ENCODE measurements at regions of chr11 and their contacts with region 1.

Region 1: DNA sequence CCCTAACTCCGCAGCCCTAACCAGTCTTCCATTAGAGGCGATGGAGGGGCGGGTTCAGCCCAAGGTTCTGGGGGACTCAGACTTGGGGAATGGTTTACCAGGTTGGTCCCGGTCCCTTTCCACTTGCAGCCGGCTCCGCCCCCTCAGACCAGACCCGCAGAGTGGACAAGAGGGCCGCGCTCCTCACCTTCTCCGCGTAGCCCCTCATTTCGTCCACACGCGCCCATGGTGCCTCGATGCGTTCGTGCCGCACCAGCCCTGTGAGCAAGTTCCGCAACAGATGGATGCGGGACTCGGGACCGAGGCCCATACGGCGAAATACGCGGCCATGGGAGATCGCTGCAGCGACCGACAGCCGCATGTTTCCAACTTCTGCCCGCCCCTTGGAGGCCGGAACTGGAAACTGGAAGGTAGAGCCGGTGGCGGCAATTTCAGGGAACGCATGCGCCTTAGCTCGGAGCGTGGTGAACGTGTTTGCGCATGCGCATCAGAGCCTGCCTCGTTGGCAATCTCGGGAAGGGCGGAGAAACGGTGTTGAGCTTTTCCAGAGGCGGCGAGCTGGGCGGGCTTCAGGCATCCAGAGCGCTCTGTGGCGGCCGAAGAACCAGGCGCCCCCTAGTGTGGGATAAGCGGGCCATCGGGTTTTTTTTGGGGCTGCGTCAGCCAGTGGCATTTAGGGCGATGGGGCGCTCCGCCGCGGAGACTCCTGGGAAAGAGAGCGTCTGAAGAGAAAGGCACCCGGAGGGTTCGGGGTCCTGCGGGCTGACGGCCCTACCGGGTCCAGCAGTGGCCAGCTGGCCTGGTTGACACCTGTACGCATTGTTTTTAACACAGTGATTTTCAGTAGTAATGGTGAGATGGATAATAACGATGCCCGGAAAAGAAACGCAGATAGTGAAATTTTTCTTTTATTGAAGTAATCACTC is at the start of gene MRPL17:
- DNase-seq: peak; percentile 94
- ATAC-seq: peak; percentile 95
- H3K4me3 Mint-ChIP-seq: peak within 1 kb of the TSS; percentile 99
- H3K27ac Mint-ChIP-seq: peak within 1 kb of the TSS; percentile 98
- H3K4me1 Mint-ChIP-seq: peaks cover 24% of the 10 kb centered on the region
- H3K27me3 Mint-ChIP-seq: no peaks in the 10 kb centered on the region
- CTCF ChIP-seq: peak; percentile 73
- total RNA-seq, gene MRPL17: 34.1 and 34.2 TPM in 2 replicates

Region 2: GRCh38 chr11:5671841-5672240 is 1011.4 kb before region 1 on chr11:
- CTCF ChIA-PET with region 1: no interaction called
- POLR2A ChIA-PET with region 1: no interaction called
- intact Hi-C with region 1: no loop called
- DNase-seq: no peak
- ATAC-seq: no peak
- H3K4me3 Mint-ChIP-seq: no peak overlapping the region
- H3K27ac Mint-ChIP-seq: no peak overlapping the region
- H3K4me1 Mint-ChIP-seq: peaks cover 4% of the 10 kb centered on the region
- H3K27me3 Mint-ChIP-seq: no peaks in the 10 kb centered on the region
- CTCF ChIP-seq: no peak

Region 3: DNA sequence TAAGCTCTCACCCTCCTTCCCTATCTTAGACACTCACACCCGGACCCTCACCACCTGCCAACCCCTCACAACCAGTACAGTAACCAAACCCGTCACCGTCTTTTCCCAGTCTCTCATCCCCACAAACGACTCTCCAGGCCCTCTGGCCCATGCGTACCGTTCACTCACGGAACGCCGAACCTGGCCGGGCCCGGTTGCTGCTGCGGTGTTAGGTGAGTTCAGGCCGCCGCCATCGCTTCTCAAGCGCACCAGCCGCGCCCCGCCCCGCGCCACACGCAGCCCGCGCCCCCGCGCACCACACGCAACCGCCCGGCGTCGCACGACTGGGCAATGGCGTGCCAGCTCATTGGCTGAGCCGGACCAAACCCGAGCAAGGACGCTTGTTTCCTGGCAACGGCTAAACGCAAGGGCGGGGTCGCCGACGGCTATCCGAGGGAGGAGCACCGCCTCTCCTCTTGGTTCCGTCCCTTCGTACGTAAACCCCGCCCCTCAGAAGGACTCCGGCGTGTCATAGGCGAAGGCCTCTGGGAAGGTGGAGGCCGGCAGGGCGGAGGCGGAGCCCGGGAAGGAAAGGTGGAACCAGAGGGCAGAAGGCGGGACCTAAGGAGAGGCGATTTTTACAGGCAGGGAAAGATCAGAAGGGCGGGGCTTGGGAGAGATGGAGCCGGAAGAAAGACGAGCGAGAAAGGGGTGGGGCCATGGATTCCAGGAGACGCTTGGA is 448.7 kb before region 1 on chr11 and contains the start of gene FHIP1B:
- CTCF ChIA-PET with region 1: no interaction called
- POLR2A ChIA-PET with region 1: no interaction called
- intact Hi-C with region 1: loop called (anchors 1 kb)
- DNase-seq: peak; percentile 95
- ATAC-seq: peak; percentile 93
- H3K4me3 Mint-ChIP-seq: peak within 1 kb of the TSS; percentile 99
- H3K27ac Mint-ChIP-seq: peak within 1 kb of the TSS; percentile 92
- H3K4me1 Mint-ChIP-seq: peaks cover 32% of the 10 kb centered on the region
- H3K27me3 Mint-ChIP-seq: peaks cover 3% of the 10 kb centered on the region
- CTCF ChIP-seq: no peak
- total RNA-seq, gene FHIP1B: 27.7 and 32.8 TPM in 2 replicates

Region 4: DNA sequence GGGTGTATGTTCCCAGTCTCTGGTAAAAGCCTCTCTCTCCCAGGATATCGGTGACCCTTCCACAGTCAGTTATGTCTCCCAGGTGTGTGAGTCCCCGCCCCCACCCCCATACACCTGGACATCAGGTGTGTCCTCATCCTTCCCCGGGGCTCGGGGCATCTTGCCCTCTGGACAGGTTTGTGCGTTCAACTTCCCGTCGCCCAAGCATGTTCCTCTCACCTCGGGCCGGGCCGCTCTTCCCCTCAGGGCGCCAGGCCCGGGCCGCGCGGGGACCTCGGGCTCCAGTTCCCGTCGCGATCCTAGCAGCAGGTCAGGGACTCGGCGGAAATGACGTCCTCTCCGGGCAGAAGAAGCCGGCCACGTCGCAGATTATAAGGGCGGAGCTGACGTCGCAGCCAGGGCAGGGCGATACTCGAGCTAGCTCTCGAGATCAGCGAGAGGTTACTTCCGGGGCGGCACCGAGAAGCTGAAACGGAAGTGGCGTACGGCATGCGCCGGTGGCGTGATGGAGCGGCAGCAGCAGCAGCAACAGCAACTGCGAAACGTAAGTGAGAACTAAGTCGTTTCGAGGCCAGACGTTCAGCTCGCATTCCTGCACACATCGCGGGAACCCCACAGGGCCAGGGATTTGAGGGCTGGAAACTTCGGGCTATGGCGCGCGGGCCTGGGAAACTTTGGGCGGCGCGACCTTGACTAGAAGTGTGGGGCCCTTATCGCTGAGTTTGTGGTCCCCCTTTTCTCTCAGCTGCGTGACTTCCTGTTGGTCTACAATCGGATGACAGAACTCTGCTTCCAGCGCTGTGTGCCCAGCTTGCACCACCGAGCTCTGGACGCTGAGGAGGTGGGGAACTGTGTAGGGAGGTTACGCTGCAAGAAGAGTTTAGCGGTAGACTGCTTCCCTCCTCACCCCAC is 201.9 kb before region 1 on chr11 and contains the starts of genes ARFIP2 and TIMM10B:
- CTCF ChIA-PET with region 1: interaction called, 8 read pairs
- POLR2A ChIA-PET with region 1: interaction called, 17 read pairs
- intact Hi-C with region 1: loop called (anchors 1 kb)
- DNase-seq: peak; percentile 92
- ATAC-seq: peak; percentile 95
- H3K4me3 Mint-ChIP-seq: peak within 1 kb of the TSS; percentile 95
- H3K27ac Mint-ChIP-seq: peak within 1 kb of the TSS; percentile 97
- H3K4me1 Mint-ChIP-seq: peaks cover 42% of the 10 kb centered on the region
- H3K27me3 Mint-ChIP-seq: no peaks in the 10 kb centered on the region
- CTCF ChIP-seq: no peak
- total RNA-seq, gene ARFIP2: 40.6 and 43.1 TPM in 2 replicates
- total RNA-seq, gene TIMM10B: 48.0 and 60.0 TPM in 2 replicates

Region 5: GRCh38 chr11:6603287-6604080 is 79.7 kb before region 1 on chr11 and contains the starts of genes ILK and RRP8:
- CTCF ChIA-PET with region 1: interaction called, 13 read pairs
- POLR2A ChIA-PET with region 1: interaction called, 36 read pairs
- intact Hi-C with region 1: loop called (anchors 1 kb)
- DNase-seq: peak; percentile 78
- ATAC-seq: peak; percentile 88
- H3K4me3 Mint-ChIP-seq: no peak within 1 kb of the TSS
- H3K27ac Mint-ChIP-seq: no peak within 1 kb of the TSS
- H3K4me1 Mint-ChIP-seq: peaks cover 10% of the 10 kb centered on the region
- H3K27me3 Mint-ChIP-seq: no peaks in the 10 kb centered on the region
- CTCF ChIP-seq: no peak
- total RNA-seq, gene ILK: 113 and 128 TPM in 2 replicates
- total RNA-seq, gene RRP8: 29.1 and 30.5 TPM in 2 replicates

Region 6: DNA sequence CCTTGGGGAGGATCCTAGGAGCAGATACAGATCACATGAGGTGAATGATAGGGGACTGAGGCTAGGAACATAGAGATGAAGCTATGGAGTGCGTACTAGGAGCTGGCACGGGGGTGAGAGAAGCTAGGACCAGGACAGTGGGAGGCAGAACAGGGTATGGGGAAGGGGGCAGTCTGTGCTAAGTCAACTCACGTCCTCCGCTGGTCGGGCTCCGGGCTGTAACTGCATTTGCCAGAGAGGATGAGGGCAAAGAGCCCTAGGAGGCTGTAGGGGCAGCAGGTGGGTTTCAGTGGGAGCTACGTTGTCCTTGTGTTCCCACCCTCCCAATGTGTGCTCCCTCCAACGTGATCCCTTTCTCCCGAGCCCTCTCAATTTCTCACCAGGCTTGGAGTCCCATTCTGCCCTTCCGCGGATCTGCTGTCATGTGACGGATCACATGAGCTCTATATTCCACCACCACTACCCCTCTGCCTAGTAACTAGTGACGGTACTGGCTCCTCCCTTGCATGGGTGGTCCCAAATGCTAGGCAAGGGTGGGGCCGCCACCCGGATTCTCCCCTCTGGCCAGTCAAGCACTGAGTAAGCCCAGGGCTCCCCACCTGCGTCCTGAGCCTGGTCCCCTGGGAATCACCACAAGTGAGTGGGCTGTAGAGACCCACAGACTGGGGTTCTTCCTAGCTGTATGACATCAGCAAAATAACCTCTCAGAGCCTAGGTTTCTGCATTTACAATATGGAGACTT is 64.0 kb before region 1 on chr11 and contains the start of gene TPP1:
- CTCF ChIA-PET with region 1: interaction called, 15 read pairs
- POLR2A ChIA-PET with region 1: interaction called, 49 read pairs
- intact Hi-C with region 1: loop called (anchors 1 kb)
- DNase-seq: peak; percentile 87
- ATAC-seq: peak; percentile 89
- H3K4me3 Mint-ChIP-seq: no peak within 1 kb of the TSS
- H3K27ac Mint-ChIP-seq: no peak within 1 kb of the TSS
- H3K4me1 Mint-ChIP-seq: peaks cover 7% of the 10 kb centered on the region
- H3K27me3 Mint-ChIP-seq: no peaks in the 10 kb centered on the region
- CTCF ChIP-seq: no peak
- total RNA-seq, gene TPP1: 98.2 and 123 TPM in 2 replicates

Region 7: DNA sequence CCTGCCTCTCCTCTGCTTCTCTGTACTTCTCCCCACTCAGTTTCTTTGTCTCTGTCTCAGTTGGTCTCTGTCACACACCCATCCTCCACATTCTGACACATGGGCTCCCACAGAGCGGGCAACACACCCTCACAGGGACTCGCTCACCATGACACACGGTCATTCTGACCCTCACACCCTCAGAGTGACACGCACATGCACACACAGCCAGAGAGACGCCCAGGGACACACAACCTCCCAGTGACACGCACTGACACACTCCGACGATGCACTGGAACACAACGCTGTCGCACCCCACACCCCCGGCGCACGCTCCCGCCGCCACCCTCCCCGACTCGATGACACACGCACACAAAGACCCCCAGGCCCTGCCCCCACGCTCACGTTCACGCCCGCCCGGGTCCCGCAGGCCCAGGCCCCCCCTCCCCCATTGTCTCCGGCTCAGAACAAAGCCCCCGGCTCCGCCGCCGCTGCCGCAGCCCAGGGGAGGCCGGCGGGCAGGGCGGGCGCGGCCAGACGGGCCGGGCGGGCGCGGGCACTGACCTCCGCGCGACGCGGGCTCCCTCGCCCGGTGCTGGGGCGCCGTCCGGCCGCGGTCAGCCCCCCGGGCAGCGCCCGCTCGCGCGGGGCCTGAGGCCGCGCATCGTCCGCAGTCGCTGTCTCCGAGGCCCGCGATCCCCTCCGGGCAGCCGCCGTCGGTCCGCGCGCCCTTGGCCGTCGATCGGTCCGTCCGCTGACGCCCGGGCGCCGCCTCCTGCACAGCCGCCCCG is 28.0 kb before region 1 on chr11:
- CTCF ChIA-PET with region 1: interaction called, 3 read pairs
- POLR2A ChIA-PET with region 1: interaction called, 4 read pairs
- intact Hi-C with region 1: loop called (anchors 1 kb)
- DNase-seq: no peak
- ATAC-seq: peak; percentile 53
- H3K4me3 Mint-ChIP-seq: no peak overlapping the region
- H3K27ac Mint-ChIP-seq: no peak overlapping the region
- H3K4me1 Mint-ChIP-seq: peaks cover 3% of the 10 kb centered on the region
- H3K27me3 Mint-ChIP-seq: peaks cover 6% of the 10 kb centered on the region
- CTCF ChIP-seq: no peak

Region 8: DNA sequence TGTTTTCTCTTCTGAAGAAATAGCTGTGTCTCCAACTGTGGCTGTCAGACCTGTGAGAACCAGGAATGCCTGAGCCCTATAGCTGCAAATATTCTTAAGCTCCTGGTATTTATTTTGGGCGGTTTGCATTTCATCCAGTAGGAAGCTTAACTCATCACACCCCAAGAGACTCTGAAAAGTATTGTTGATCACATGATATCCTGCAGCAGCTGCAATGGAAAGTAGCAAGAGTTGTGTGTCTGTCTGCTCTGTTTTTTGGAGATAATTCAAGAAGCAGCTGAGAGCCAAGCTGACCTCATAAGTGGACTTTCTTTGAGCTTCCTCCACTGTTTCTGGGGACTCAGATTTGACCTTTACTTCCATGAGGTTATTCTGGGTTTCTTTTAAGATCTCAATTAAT is 36.4 kb after region 1 on chr11:
- CTCF ChIA-PET with region 1: no interaction called
- POLR2A ChIA-PET with region 1: no interaction called
- intact Hi-C with region 1: no loop called
- DNase-seq: no peak
- ATAC-seq: no peak
- H3K4me3 Mint-ChIP-seq: no peak overlapping the region
- H3K27ac Mint-ChIP-seq: no peak overlapping the region
- H3K4me1 Mint-ChIP-seq: peaks cover 34% of the 10 kb centered on the region
- H3K27me3 Mint-ChIP-seq: no peaks in the 10 kb centered on the region
- CTCF ChIP-seq: no peak

Region 9: DNA sequence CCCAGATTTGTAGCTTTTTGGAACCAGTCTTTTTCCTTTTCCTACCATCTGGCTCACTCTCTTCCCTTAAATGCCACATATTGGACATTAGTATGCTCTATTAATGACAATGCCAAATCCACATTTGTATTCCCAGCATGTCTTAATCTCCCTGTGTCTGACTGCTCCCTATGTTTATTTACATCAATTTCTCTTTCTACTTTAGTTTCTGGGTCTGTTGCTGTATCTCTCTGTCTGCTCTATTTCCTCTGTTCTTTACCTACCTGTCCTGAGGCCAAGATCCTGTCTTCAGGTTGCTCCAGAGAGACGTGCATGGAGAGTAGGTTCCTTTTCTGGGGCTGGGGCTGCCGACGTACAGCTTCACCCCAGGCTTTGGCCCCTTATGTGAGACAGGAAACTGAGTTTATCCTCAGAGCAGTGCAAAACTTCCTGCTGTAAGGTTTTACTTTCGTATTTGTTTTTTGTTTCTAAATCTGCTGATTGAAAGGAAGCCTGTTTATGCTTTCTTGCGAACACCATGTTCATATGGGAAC is 63.0 kb after region 1 on chr11:
- CTCF ChIA-PET with region 1: interaction called, 3 read pairs
- POLR2A ChIA-PET with region 1: interaction called, 4 read pairs
- intact Hi-C with region 1: loop called (anchors 1 kb)
- DNase-seq: peak; percentile 24
- ATAC-seq: peak; percentile 80
- H3K4me3 Mint-ChIP-seq: no peak overlapping the region
- H3K27ac Mint-ChIP-seq: no peak overlapping the region
- H3K4me1 Mint-ChIP-seq: peaks cover 2% of the 10 kb centered on the region
- H3K27me3 Mint-ChIP-seq: no peaks in the 10 kb centered on the region
- CTCF ChIP-seq: no peak

Measured in activated B cell treated with CpG ODN at 0.5 μM for 24 hours (primary cell).